Gastrocnemius medialis (tissue), 4 donors: ENCODE measurements at regions of chr6 and their contacts with region 1.

Region 1: GRCh38 chr6:134347916-134348805 is 30.2 kb upstream of the SGK1 start:
- DNase-seq: peak; percentile 45 to 60
- ATAC-seq: peak; percentile 50 to 56
- H3K4me3 ChIP-seq: peak overlapping the region; percentile 4 to 43 (median 30)
- H3K27ac ChIP-seq: peak overlapping the region; percentile 75 to 89 (median 85)
- H3K4me1 ChIP-seq: peaks cover 30 to 57% of the 10 kb centered on the region in 2 donors
- H3K27me3 ChIP-seq: no peaks in the 10 kb centered on the region
- CTCF ChIP-seq: no peak
- POLR2A ChIP-seq: peak in 1 of 2 donors; percentile 43

Region 2: DNA sequence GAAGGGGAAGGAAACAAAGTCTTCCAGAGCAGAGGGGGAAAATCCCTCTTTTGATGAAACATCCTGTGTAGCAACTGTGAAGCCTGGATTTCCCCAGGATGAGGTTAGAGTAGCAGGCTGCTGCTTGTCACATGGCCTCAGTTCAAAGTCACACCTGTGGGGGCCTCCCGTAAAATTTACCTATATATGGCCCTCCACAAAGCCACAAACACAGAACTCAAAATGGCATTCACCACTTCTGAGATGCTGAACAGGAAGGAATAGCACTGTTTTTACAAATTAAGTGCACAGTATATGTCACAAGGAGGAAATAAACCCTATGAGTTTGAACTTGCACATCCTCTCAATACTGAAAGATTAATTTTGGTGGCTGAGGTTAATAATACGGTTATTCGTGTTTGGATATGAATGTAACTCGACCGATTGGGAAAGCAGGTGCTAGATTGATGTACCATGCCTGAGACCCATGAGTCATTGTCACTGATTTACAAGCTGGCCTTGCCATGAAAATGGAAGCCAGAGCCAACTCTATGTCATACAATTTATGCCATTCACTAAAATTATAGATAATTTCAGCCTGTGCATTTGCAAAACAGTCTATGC is 100.8 kb before region 1 on chr6:
- in situ Hi-C with region 1: no loop called
- intact Hi-C with region 1: loop called (anchors 5 kb)
- DNase-seq: peak; percentile 39 to 47
- ATAC-seq: peak; percentile 92 to 98
- H3K4me3 ChIP-seq: no peak overlapping the region
- H3K27ac ChIP-seq: peak overlapping the region; percentile 52 to 78 (median 60)
- H3K4me1 ChIP-seq: peaks cover 40 to 41% of the 10 kb centered on the region in 2 donors
- H3K27me3 ChIP-seq: no peaks in the 10 kb centered on the region
- CTCF ChIP-seq: no peak
- POLR2A ChIP-seq: no peak

Region 3: DNA sequence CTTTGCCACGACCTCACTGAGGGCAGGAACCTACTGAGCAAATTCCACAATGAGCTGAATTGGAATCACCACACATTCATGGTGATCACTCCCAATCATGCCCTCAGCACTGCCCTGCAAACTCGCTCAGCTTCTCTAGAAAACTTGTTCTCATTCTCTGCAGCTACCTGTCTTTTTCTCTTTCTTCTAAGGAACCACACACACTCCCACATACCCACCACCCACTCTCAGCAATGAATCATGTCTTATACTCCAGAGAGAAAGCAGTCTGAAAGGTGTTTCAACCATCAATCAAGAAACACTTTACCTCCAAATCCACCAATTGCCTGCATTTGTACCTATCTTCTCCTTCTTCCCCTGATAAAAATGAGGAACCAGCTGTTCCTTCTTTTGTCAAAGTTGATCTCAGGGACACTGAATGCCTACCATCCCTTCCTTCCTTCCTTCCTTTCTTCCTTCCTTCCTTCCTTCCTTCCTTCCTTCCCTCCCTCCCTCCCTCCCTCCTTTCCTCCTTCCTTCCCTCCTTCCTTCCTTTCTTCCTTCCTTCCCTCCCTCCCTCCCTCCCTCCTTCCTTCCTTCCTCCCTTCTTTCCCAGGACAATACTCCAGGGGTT is 54.3 kb after region 1 on chr6:
- in situ Hi-C with region 1: no loop called
- intact Hi-C with region 1: loop called (anchors 5 kb)
- DNase-seq: no peak
- ATAC-seq: no peak
- H3K4me3 ChIP-seq: no peak overlapping the region
- H3K27ac ChIP-seq: peak overlapping the region in 2 of 4 donors; percentile 36 to 59
- H3K4me1 ChIP-seq: peaks cover 11 to 22% of the 10 kb centered on the region in 2 donors
- H3K27me3 ChIP-seq: no peaks in the 10 kb centered on the region
- CTCF ChIP-seq: no peak
- POLR2A ChIP-seq: no peak

Region 4: DNA sequence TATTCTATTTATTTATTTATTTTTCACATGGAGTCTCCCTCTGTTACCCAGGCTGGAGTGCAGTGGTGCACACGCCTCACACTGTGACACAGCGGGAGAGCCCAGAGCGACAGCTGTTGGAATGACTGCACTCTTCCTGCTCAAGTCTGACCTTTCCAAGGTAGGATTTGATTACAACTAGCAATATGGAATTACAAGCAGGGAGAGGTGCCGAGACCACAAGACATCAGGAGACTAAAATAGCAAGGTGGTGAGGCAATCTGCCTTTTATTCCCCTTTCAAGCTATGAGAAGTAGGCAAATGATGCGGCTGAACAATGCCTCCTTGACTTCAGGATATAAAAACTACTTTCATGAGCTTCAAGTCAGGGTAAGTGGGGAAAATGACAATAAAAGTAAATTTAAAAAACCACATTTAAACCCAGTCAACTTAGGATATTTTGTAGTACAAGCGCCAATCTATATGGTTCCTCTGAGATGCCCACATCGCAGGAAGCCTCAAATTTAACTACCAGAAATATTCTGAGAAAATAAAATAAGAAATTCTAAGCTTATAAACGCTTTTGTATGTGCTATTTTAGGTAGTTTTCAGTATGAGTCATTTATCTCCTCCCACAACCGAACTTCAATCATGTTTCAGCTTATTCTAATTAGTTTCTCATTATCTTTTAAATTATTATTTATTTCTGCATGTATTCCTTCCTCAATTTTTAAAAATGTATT is 116.7 kb after region 1 on chr6:
- in situ Hi-C with region 1: no loop called
- intact Hi-C with region 1: loop called (anchors 2 kb)
- DNase-seq: peak; percentile 83 to 91
- ATAC-seq: peak; percentile 91 to 97
- H3K4me3 ChIP-seq: no peak overlapping the region
- H3K27ac ChIP-seq: peak overlapping the region; percentile 86 to 90 (median 87)
- H3K4me1 ChIP-seq: peaks cover 34 to 56% of the 10 kb centered on the region in 2 donors
- H3K27me3 ChIP-seq: no peaks in the 10 kb centered on the region
- CTCF ChIP-seq: no peak
- POLR2A ChIP-seq: no peak

Region 5: DNA sequence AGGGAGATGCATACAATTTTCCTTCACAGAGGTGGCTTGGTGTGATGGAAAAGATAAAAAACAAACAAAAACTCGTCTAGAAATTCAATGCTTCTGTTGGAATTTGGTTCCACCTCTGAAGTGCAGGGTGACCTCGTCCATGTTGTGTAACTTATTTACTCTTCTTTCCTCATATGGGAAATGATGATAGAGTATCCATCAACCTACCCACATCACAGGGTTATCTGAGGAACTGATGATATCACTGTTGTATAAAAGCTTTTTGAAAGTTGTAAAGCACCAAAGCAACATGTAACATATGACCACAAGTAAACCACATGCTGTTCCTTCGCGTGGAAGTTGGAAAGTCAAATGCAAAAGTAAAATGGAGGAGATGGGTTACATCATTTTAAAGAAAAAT is 181.8 kb after region 1 on chr6:
- in situ Hi-C with region 1: no loop called
- intact Hi-C with region 1: loop called (anchors 5 kb)
- DNase-seq: no peak
- ATAC-seq: no peak
- H3K4me3 ChIP-seq: no peak overlapping the region
- H3K27ac ChIP-seq: no peak overlapping the region
- H3K4me1 ChIP-seq: peaks cover 13 to 24% of the 10 kb centered on the region in 2 donors
- H3K27me3 ChIP-seq: no peaks in the 10 kb centered on the region
- CTCF ChIP-seq: no peak
- POLR2A ChIP-seq: no peak

Region 6: DNA sequence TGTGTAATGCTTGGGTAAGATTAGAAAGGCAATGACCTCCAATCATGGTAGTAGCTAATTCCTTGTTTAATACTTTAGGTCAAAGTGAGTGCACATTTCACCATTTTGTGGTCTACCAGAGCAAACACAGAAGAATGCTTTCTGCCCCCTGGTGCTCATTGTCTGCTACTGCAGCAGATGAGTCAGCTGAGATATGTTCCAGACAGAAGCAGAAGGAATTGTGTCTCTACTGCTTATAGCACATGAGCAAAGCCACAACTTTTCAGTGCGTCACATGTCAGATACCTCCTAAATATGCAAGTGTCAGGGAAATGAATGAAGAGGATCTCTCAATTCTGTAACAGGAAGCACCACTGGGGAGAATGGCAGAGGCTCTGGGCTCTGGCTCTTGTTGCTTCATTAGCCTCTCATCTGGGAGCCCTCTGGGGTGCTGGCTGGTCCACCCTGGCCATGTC is 292.8 kb after region 1 on chr6:
- in situ Hi-C with region 1: no loop called
- intact Hi-C with region 1: loop called (anchors 10 kb)
- DNase-seq: peak; percentile 68 to 84
- ATAC-seq: peak; percentile 90 to 97
- H3K4me3 ChIP-seq: no peak overlapping the region
- H3K27ac ChIP-seq: peak overlapping the region in 3 of 4 donors; percentile 3 to 57 (median 21)
- H3K4me1 ChIP-seq: peaks cover 7 to 12% of the 10 kb centered on the region in 2 donors
- H3K27me3 ChIP-seq: no peaks in the 10 kb centered on the region
- CTCF ChIP-seq: peak; percentile 92 to 98 (median 95)
- POLR2A ChIP-seq: no peak

Region 7: DNA sequence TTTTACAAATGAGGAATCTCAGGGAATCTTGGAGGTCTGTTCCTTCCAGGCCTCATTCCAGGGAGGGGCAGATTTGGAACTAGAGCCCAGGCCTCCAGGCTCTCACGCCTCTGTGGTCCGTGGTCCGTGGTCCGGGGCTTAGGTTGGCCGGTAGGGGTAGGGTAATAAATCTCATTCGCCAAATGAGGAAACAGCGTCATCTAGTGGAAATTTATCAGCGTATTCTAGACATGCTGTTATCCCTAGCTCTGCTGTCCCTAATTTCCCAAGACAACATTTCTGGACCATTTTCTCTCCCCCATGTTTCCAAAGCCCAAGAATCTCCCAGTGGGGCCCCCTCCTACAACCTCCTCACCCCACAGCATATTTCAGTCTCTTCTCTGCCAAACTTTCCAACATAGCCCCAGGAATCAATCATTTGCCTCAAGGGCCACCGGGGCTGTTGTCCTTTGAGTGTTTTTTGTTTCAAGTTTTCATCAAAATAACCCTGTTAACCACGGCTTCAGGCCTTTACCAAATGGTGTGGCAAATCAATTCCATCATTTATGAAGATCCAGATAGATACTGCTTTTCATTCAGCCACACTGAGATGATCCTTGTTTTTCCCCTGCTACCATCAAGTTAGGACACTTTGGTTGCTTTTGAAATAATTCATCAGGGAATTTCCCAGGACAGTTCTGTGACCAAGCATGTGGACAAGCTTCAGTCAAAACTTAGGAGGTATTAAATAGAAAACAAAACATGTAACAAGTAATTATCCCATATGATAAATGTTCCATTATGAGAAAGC is 475.0 kb after region 1 on chr6:
- in situ Hi-C with region 1: no loop called
- intact Hi-C with region 1: loop called (anchors 10 kb)
- DNase-seq: peak; percentile 18 to 26
- ATAC-seq: peak; percentile 62 to 70
- H3K4me3 ChIP-seq: no peak overlapping the region
- H3K27ac ChIP-seq: no peak overlapping the region
- H3K4me1 ChIP-seq: peaks cover 13 to 18% of the 10 kb centered on the region in 2 donors
- H3K27me3 ChIP-seq: no peaks in the 10 kb centered on the region
- CTCF ChIP-seq: peak; percentile 84 to 95 (median 89)
- POLR2A ChIP-seq: no peak